Activated B cell treated with CpG ODN at 0.5 μM for 24 hours (primary cell): ENCODE measurements at regions of chr9 and their contacts with region 1.

Region 1: GRCh38 chr9:29873579-29873978 is 2300.3 kb upstream of the C9orf72 start:
- DNase-seq: no peak
- ATAC-seq: no peak
- H3K4me3 Mint-ChIP-seq: no peak overlapping the region
- H3K27ac Mint-ChIP-seq: no peak overlapping the region
- H3K4me1 Mint-ChIP-seq: no peaks in the 10 kb centered on the region
- H3K27me3 Mint-ChIP-seq: no peaks in the 10 kb centered on the region
- CTCF ChIP-seq: no peak

Region 2: DNA sequence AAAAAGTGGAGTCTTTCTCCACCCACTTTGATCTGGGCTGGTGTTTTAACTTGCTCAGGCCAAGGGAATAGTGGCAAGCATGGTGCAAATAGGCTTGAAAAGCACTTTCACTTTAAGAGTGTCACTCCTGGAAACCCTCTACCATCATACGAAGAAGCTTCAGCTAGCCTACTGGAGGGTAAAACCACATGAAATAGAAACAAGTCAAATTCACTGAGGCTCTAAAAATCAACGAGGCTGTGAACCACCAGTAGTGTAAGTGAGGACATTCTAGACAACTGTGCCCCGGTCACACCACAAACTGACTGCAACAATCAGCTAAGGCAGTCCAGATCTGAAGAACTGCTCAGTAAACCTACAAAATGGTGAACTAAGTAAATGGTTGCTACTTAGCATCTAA is 66.0 kb after region 1 on chr9:
- CTCF ChIA-PET with region 1: no interaction called
- POLR2A ChIA-PET with region 1: no interaction called
- intact Hi-C with region 1: loop called (anchors 10 kb)
- DNase-seq: no peak
- ATAC-seq: no peak
- H3K4me3 Mint-ChIP-seq: no peak overlapping the region
- H3K27ac Mint-ChIP-seq: no peak overlapping the region
- H3K4me1 Mint-ChIP-seq: no peaks in the 10 kb centered on the region
- H3K27me3 Mint-ChIP-seq: no peaks in the 10 kb centered on the region
- CTCF ChIP-seq: no peak